ENCODE measurements at regions of chr1 and their contacts with region 1.

Region 1: DNA sequence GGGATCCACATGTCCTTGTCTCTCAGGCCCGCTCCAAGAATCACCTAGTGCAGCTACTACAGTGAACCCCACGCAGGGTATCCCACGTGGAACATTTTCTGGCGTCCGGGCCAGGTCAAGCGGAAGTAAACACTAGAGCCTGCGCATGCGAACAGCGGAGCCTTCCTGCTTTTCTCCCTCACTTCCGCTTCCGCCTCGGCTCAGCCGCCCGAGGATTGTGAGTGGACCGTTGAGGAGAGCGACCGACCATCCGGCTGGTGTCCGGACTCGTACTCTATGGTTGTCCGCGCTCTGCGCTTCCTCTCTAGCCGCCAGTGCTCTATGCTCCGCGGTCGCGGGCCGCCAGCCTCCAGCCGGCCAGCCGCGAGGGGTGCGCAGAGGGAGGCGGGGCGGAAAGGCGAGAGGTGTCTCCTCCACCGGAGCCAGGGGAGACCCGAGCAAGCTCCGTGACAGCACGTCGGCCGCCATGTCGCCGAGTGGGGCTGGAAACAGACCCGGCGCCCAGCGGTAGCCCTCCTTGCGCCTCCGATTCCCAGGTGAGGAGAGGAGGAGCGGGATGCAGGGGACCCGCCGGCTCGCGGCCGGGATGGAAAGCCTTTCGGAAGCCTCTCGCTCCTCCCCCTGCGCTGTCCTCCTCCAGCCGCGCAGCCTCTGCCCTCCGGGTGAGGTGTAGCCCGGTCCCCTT is at the starts of genes CNST and TFB2M:
- DNase-seq: peak; percentile 75 to 95 (median 89)
- ATAC-seq: peak; percentile 85
- H3K4me3 ChIP-seq: peak within 1 kb of the TSS; percentile 84
- H3K4me3 Mint-ChIP-seq: peak within 1 kb of the TSS; percentile 93 to 99 (median 98)
- H3K27ac ChIP-seq: peak within 1 kb of the TSS; percentile 89
- H3K27ac Mint-ChIP-seq: peak within 1 kb of the TSS; percentile 90 to 99 (median 96)
- H3K4me1 ChIP-seq: peaks cover 33 to 46% of the 10 kb centered on the region in 2 donors
- H3K4me1 Mint-ChIP-seq: peaks cover 35 to 61% (median 45%) of the 10 kb centered on the region in 7 donors
- H3K27me3 ChIP-seq: no peaks in the 10 kb centered on the region
- H3K27me3 Mint-ChIP-seq: no peaks in the 10 kb centered on the region
- total RNA-seq, gene CNST: 30.5 to 111 (median 80.2) TPM
- total RNA-seq, gene TFB2M: 9.5 to 12.2 (median 10.3) TPM

Region 2: DNA sequence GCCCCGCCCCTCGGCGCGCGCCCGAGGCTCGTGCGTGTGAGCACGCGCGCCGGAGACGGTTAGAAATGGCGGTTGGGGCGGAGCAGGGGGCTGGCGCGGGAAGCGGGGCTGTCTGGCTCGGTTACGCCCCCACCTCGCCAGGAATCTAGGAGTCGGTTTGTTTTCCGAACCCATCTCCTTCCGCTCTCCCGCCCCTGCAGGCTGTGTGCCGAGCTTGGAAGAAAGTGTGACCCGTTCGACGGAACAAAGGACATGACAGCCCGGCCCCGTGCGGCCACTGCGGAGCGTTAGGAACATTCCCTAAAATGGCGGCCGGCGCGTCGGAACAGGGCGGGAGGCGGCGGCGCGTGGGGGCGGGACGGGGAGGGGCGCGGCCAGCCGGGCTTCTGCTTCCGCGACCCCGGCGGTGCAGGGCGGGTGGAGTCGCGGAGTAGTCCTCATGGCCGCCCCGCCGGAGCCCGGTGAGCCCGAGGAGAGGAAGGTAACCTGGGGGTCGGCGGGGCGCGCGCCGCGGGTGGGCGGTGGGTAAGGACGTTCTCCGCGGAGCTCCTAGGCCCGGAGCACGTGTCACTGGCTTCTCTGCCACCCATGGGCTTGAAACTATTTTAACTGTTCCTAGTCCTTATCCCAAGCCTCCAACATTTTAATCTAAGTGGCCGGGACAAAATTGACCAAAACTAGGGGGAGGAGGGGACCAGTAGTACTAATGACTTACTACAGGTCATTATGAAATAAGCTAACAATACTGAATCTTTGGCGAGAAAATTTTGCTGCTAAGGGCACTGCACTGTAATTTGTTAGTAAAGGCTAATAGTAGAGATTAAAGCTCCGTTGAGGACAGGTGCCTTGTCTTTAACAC is 1730.8 kb before region 1 on chr1 and contains the start of gene COX20:
- CTCF ChIA-PET with region 1: no interaction called
- POLR2A ChIA-PET with region 1: no interaction called
- intact Hi-C with region 1: loop called (anchors 1 kb)
- DNase-seq: peak; percentile 84 to 97 (median 93)
- ATAC-seq: peak; percentile 84
- H3K4me3 ChIP-seq: peak within 1 kb of the TSS; percentile 87
- H3K4me3 Mint-ChIP-seq: peak within 1 kb of the TSS; percentile 85 to 100 (median 97)
- H3K27ac ChIP-seq: peak within 1 kb of the TSS; percentile 96
- H3K27ac Mint-ChIP-seq: peak within 1 kb of the TSS; percentile 99 to 100 (median 100)
- H3K4me1 ChIP-seq: peaks cover 17 to 27% of the 10 kb centered on the region in 2 donors
- H3K4me1 Mint-ChIP-seq: peaks cover 34 to 55% (median 48%) of the 10 kb centered on the region in 7 donors
- H3K27me3 ChIP-seq: no peaks in the 10 kb centered on the region
- H3K27me3 Mint-ChIP-seq: no peaks in the 10 kb centered on the region
- total RNA-seq, gene COX20: 23.5 to 31.0 (median 27.8) TPM

Region 3: GRCh38 chr1:245953876-245954660 is 612.2 kb before region 1 on chr1:
- CTCF ChIA-PET with region 1: no interaction called
- POLR2A ChIA-PET with region 1: no interaction called
- intact Hi-C with region 1: loop called (anchors 10 kb)
- DNase-seq: peak in 6 of 9 donors; percentile 17 to 49 (median 34)
- ATAC-seq: peak; percentile 45
- H3K4me3 ChIP-seq: peak overlapping the region; percentile 31
- H3K4me3 Mint-ChIP-seq: peak overlapping the region in 8 of 10 donors; percentile 56 to 90 (median 78)
- H3K27ac ChIP-seq: peak overlapping the region; percentile 76
- H3K27ac Mint-ChIP-seq: peak overlapping the region in 1 of 9 donors; percentile 97
- H3K4me1 ChIP-seq: peaks cover 25 to 27% of the 10 kb centered on the region in 2 donors
- H3K4me1 Mint-ChIP-seq: peaks cover 9 to 29% (median 19%) of the 10 kb centered on the region in 7 donors
- H3K27me3 ChIP-seq: no peaks in the 10 kb centered on the region
- H3K27me3 Mint-ChIP-seq: no peaks in the 10 kb centered on the region

Region 4: DNA sequence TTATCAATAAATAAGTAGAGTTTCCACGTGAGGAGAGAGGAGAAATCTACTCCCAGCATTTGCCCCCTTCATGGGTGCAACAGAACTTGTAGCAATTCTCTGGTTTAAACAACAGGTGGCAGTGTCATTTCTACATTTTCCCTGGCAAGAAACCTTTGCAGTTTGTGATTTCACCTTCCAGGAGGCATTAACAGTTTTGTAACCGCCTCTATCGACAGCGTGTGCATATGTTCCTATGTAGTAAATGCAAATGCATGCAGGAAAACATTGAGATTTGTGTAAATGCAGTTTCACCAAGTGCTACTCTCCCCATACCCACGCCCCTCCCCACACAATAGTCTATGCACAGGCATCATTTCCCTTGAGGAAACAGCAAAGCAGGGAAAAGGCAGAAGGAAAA is 553.9 kb before region 1 on chr1:
- CTCF ChIA-PET with region 1: no interaction called
- POLR2A ChIA-PET with region 1: no interaction called
- intact Hi-C with region 1: no loop called
- DNase-seq: peak in 5 of 9 donors; percentile 14 to 30 (median 22)
- ATAC-seq: peak; percentile 50
- H3K4me3 ChIP-seq: no peak overlapping the region
- H3K4me3 Mint-ChIP-seq: no peak overlapping the region
- H3K27ac ChIP-seq: no peak overlapping the region
- H3K27ac Mint-ChIP-seq: peak overlapping the region in 2 of 9 donors; percentile 13 to 49
- H3K4me1 ChIP-seq: no peaks in the 10 kb centered on the region
- H3K4me1 Mint-ChIP-seq: peaks cover 0 to 3% (median 0%) of the 10 kb centered on the region in 7 donors
- H3K27me3 ChIP-seq: no peaks in the 10 kb centered on the region
- H3K27me3 Mint-ChIP-seq: no peaks in the 10 kb centered on the region

Region 5: DNA sequence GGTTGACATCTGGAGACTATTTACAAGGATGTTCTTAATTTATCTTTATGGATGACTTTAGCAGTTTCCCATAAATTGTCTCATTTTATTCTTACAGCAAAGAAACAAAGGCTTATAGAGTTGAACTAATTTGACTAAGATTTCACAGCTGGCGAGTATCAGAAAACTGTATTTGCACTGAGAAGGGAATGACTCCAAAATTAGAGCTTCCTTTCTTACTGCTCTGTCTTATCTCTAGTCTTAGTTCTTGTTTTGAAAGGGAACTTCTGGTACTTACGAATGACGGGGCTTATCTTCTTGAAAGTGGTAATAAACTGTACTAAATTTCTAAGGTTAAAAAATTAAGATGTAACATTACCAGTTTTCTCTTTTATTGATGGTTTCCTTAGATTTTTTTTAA is 13.5 kb after region 1 on chr1:
- CTCF ChIA-PET with region 1: interaction called, 3 read pairs
- POLR2A ChIA-PET with region 1: interaction called, 10 read pairs
- intact Hi-C with region 1: loop called in 1 of 2 experiments (anchors 1 kb)
- DNase-seq: no peak
- ATAC-seq: peak; percentile 42
- H3K4me3 ChIP-seq: no peak overlapping the region
- H3K4me3 Mint-ChIP-seq: peak overlapping the region in 9 of 10 donors; percentile 30 to 87 (median 55)
- H3K27ac ChIP-seq: peak overlapping the region; percentile 15
- H3K27ac Mint-ChIP-seq: peak overlapping the region in 5 of 9 donors; percentile 0 to 62 (median 51)
- H3K4me1 ChIP-seq: peaks cover 0 to 55% of the 10 kb centered on the region in 2 donors
- H3K4me1 Mint-ChIP-seq: peaks cover 47 to 98% (median 91%) of the 10 kb centered on the region in 7 donors
- H3K27me3 ChIP-seq: no peaks in the 10 kb centered on the region
- H3K27me3 Mint-ChIP-seq: no peaks in the 10 kb centered on the region

Region 6: GRCh38 chr1:246699095-246699735 is 132.9 kb after region 1 on chr1:
- CTCF ChIA-PET with region 1: no interaction called
- POLR2A ChIA-PET with region 1: no interaction called
- intact Hi-C with region 1: loop called (anchors 1 to 2 kb)
- DNase-seq: peak; percentile 48 to 81 (median 74)
- ATAC-seq: peak; percentile 98
- H3K4me3 ChIP-seq: peak overlapping the region; percentile 26
- H3K4me3 Mint-ChIP-seq: peak overlapping the region; percentile 30 to 76 (median 70)
- H3K27ac ChIP-seq: no peak overlapping the region
- H3K27ac Mint-ChIP-seq: peak overlapping the region in 2 of 9 donors; percentile 13 to 39
- H3K4me1 ChIP-seq: no peaks in the 10 kb centered on the region
- H3K4me1 Mint-ChIP-seq: peaks cover 0 to 11% (median 7%) of the 10 kb centered on the region in 7 donors
- H3K27me3 ChIP-seq: no peaks in the 10 kb centered on the region
- H3K27me3 Mint-ChIP-seq: peaks cover 0 to 10% (median 0%) of the 10 kb centered on the region in 5 donors

Region 7: DNA sequence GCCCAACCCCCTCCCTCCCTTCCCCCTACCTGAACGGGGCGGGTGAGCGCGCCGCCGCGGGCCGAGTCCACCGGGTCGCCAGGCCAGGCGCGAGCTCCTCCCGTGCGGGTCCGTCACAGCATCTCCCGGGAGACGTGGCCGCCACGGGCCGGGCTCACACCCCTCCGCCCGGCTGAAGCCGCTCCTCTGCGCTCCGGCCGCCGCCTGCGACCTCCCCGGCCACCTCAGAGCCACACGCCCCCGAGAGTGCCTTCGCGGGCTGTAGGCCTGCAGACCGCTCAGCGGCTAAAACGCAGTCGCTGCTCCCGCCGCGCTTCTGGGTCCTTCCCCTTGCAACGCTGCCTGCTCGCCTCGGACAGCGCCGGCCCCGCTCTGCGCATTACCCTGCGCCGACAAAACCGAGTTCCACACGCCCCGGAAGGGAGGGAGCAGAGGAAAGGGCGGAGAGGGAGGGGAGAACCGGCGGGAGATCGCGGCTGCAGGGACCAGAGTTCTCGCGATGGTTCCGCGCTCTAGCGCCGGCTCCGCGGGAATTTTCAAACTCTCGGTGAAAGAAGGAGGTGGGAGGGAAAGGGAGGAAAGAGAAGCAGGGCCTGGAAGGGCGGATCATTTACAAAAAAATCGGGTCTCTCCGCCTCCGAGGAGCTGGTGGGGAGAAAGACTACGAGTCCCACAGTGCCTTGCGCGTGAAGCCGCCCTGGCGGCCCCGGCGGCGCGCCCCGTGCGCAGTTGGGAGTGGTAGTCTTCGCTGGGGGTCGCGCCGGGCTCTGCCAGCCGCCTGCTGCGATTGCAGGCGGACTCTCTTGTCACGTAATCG is 365.5 kb after region 1 on chr1 and contains the start of gene AHCTF1:
- CTCF ChIA-PET with region 1: no interaction called
- POLR2A ChIA-PET with region 1: no interaction called
- intact Hi-C with region 1: loop called (anchors 1 kb)
- DNase-seq: peak; percentile 86 to 98 (median 95)
- ATAC-seq: peak; percentile 95
- H3K4me3 ChIP-seq: peak within 1 kb of the TSS; percentile 87
- H3K4me3 Mint-ChIP-seq: peak within 1 kb of the TSS; percentile 91 to 98 (median 96)
- H3K27ac ChIP-seq: peak within 1 kb of the TSS; percentile 86
- H3K27ac Mint-ChIP-seq: peak within 1 kb of the TSS; percentile 92 to 99 (median 96)
- H3K4me1 ChIP-seq: peaks cover 7 to 8% of the 10 kb centered on the region in 2 donors
- H3K4me1 Mint-ChIP-seq: peaks cover 30 to 50% (median 35%) of the 10 kb centered on the region in 7 donors
- H3K27me3 ChIP-seq: no peaks in the 10 kb centered on the region
- H3K27me3 Mint-ChIP-seq: peaks cover 0 to 4% (median 0%) of the 10 kb centered on the region in 5 donors
- total RNA-seq, gene AHCTF1: 31.8 to 66.5 (median 57.3) TPM

Region 8: DNA sequence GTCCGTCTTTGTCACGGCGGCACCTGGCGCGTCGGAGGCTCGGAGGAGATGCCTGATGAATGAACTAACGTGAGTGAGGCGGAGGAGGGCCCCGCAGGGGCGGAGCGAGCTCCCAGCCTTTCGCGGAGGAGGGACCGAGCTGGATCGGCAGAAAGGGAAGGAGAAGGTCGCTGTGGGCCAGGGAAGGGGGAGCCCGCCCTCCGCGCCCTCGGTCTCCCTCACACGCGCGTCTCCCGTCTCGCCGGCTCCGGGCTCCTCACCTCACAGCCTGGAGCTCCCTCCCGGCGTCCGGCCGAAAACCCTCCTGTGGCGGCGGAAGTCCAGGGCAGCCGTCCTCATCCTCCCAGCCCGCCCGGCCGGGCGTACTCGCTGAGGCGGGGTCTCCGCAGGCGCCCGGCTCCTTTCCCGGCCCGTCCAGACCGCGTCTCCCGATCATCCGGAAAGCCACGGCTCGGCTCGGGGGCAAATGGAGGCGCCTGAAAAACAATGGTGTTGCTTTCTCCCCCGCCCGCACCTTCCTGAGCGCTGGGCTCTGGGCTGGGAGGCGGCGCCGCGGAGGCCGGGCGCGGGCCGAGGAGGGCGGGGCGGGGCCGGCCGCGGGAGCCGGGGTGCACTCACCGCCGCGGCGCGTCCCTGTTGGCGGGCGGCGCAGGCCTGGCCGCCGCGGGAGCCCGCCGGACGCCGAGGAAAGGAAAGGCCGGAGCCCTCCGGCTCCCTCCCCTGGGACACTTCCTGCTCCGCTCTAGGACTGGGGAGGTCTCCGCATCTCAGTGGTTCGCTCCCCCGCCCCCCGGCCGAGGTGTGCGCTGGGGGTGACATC is 765.1 kb after region 1 on chr1 and contains the start of gene ZNF496:
- CTCF ChIA-PET with region 1: no interaction called
- POLR2A ChIA-PET with region 1: no interaction called
- intact Hi-C with region 1: loop called in 1 of 2 experiments (anchors 10 kb)
- DNase-seq: peak; percentile 46 to 77 (median 67)
- ATAC-seq: peak; percentile 76
- H3K4me3 ChIP-seq: peak within 1 kb of the TSS; percentile 64
- H3K4me3 Mint-ChIP-seq: peak within 1 kb of the TSS; percentile 91 to 99 (median 94)
- H3K27ac ChIP-seq: peak within 1 kb of the TSS; percentile 72
- H3K27ac Mint-ChIP-seq: peak within 1 kb of the TSS in 8 of 9 donors; percentile 77 to 92 (median 86)
- H3K4me1 ChIP-seq: peaks cover 6 to 14% of the 10 kb centered on the region in 2 donors
- H3K4me1 Mint-ChIP-seq: peaks cover 13 to 43% (median 29%) of the 10 kb centered on the region in 7 donors
- H3K27me3 ChIP-seq: no peaks in the 10 kb centered on the region
- H3K27me3 Mint-ChIP-seq: no peaks in the 10 kb centered on the region
- total RNA-seq, gene ZNF496: 9.5 to 25.1 (median 17.3) TPM